ENCODE measurements at regions of chr18 and their contacts with region 1.

Region 1: GRCh38 chr18:1884623-1885022 is 686.7 kb downstream of the METTL4 start:
- DNase-seq: no peak
- ATAC-seq: no peak
- H3K4me3 ChIP-seq: no peak overlapping the region
- H3K27ac ChIP-seq: no peak overlapping the region
- H3K4me1 ChIP-seq: no peaks in the 10 kb centered on the region
- H3K27me3 ChIP-seq: peaks cover 0 to 3% (median 0%) of the 10 kb centered on the region in 7 donors
- CTCF ChIP-seq: no peak

Region 2: GRCh38 chr18:1954583-1955312 is 70.1 kb after region 1 on chr18:
- intact Hi-C with region 1: loop called in 1 of 10 experiments (anchors 10 kb)
- DNase-seq: no peak
- ATAC-seq: peak in 1 of 8 donors; percentile 17
- H3K4me3 ChIP-seq: no peak overlapping the region
- H3K27ac ChIP-seq: no peak overlapping the region
- H3K4me1 ChIP-seq: no peaks in the 10 kb centered on the region
- H3K27me3 ChIP-seq: no peaks in the 10 kb centered on the region
- CTCF ChIP-seq: no peak

Measured in heart right ventricle (tissue), 16 donors.